B cell (primary cell): ENCODE measurements at regions of chr16 and their contacts with region 1.

Region 1: GRCh38 chr16:87853411-87854052 is 15.8 kb downstream of the SLC7A5 start:
- DNase-seq: peak; percentile 80
- ATAC-seq: peak; percentile 69
- H3K4me3 ChIP-seq: peak overlapping the region in 2 of 5 experiments; percentile 22 to 46
- H3K4me3 Mint-ChIP-seq: peak overlapping the region; percentile 71
- H3K27ac ChIP-seq: no peak overlapping the region
- H3K27ac Mint-ChIP-seq: peak overlapping the region; percentile 15
- H3K4me1 ChIP-seq: peaks cover 4 to 37% of the 10 kb centered on the region in 2 donors
- H3K4me1 Mint-ChIP-seq: peaks cover 29% of the 10 kb centered on the region
- H3K27me3 ChIP-seq: no peaks in the 10 kb centered on the region
- H3K27me3 Mint-ChIP-seq: no peaks in the 10 kb centered on the region
- CTCF ChIP-seq: no peak

Region 2: DNA sequence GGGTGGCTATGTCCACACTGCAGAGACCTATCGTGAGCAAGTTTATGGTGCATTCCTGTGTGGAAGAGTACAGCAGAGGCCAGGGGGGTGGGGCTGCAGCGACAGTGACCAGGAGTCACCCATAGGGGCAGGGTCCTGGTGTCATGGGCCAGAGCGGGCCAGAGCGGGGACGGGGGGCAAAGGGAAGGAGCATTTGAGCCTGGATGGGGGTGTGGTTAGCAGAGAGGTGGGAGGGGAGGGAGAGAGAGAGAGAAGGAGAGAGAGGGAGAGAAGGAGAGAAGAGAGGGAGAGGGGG is 233.4 kb before region 1 on chr16:
- CTCF ChIA-PET with region 1: no interaction called
- POLR2A ChIA-PET with region 1: no interaction called
- intact Hi-C with region 1: no loop called
- DNase-seq: no peak
- ATAC-seq: no peak
- H3K4me3 ChIP-seq: no peak overlapping the region
- H3K4me3 Mint-ChIP-seq: no peak overlapping the region
- H3K27ac ChIP-seq: no peak overlapping the region
- H3K27ac Mint-ChIP-seq: no peak overlapping the region
- H3K4me1 ChIP-seq: no peaks in the 10 kb centered on the region
- H3K4me1 Mint-ChIP-seq: no peaks in the 10 kb centered on the region
- H3K27me3 ChIP-seq: no peaks in the 10 kb centered on the region
- H3K27me3 Mint-ChIP-seq: peaks cover 14% of the 10 kb centered on the region
- CTCF ChIP-seq: no peak

Region 3: DNA sequence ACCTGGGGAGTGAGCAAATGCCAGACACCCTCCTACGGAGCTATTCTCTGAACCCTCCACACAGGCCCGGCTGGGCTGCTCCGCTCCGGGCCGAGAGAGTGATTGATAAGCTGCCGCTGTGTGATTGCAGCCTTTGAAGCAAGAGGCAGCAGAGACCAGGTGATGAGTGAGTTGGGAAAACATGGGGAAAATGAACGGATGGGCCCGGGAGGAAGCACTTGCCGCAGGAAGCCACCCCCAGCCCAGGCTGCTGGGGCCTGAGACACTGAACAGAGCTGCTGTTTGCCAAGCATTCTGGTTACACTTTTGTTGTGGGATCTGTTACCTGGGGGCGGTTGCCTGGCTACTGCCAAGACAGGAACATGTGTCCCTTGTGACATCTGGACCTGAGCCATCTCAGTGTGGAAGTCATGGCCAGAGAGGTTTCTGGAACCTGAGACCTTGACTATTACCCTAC is 41.3 kb before region 1 on chr16:
- CTCF ChIA-PET with region 1: interaction called, 26 read pairs
- POLR2A ChIA-PET with region 1: no interaction called
- intact Hi-C with region 1: loop called (anchors 5 kb)
- DNase-seq: no peak
- ATAC-seq: no peak
- H3K4me3 ChIP-seq: no peak overlapping the region
- H3K4me3 Mint-ChIP-seq: no peak overlapping the region
- H3K27ac ChIP-seq: no peak overlapping the region
- H3K27ac Mint-ChIP-seq: peak overlapping the region; percentile 27
- H3K4me1 ChIP-seq: peaks cover 33 to 51% of the 10 kb centered on the region in 2 donors
- H3K4me1 Mint-ChIP-seq: peaks cover 49% of the 10 kb centered on the region
- H3K27me3 ChIP-seq: peaks cover 0 to 5% (median 0%) of the 10 kb centered on the region in 4 experiments
- H3K27me3 Mint-ChIP-seq: no peaks in the 10 kb centered on the region
- CTCF ChIP-seq: no peak

Region 4: GRCh38 chr16:87834623-87835407 is 18.7 kb before region 1 on chr16:
- CTCF ChIA-PET with region 1: interaction called, 16 read pairs
- POLR2A ChIA-PET with region 1: no interaction called
- intact Hi-C with region 1: no loop called
- DNase-seq: no peak
- ATAC-seq: no peak
- H3K4me3 ChIP-seq: no peak overlapping the region
- H3K4me3 Mint-ChIP-seq: no peak overlapping the region
- H3K27ac ChIP-seq: no peak overlapping the region
- H3K27ac Mint-ChIP-seq: no peak overlapping the region
- H3K4me1 ChIP-seq: peaks cover 3 to 21% of the 10 kb centered on the region in 2 donors
- H3K4me1 Mint-ChIP-seq: peaks cover 14% of the 10 kb centered on the region
- H3K27me3 ChIP-seq: no peaks in the 10 kb centered on the region
- H3K27me3 Mint-ChIP-seq: no peaks in the 10 kb centered on the region
- CTCF ChIP-seq: no peak

Region 5: DNA sequence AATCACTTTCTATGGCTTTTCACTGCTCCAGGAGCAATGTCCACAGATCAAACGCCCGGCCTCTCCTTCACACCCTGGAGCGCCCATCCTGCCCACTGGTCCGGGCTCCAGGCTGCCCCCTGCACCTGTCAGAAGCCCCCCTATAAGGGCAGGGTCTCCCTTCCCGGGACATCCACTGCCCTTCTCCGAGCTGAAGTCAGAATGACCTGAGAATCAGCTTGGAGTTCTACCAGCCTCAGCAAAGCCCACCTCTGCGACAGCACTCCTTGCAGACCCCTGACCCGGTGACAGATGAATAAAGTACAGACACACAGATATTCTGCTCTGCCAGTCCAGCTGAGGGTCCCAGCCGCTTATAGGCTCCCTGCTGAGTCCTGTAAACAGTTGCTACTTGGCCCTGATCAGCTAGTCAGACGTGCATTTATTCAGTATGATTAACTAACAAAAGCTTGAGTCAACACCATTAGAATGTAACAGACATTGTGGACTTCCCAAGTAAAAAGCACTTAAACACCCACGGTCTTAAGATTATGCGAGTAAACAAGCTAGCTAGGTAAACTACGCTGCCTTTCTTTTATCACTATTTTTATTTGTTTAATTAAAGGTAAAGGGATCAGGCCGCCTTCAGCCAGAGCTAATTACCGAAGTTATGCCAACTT is 10.9 kb after region 1 on chr16:
- CTCF ChIA-PET with region 1: interaction called, 72 read pairs
- POLR2A ChIA-PET with region 1: interaction called, 4 read pairs
- intact Hi-C with region 1: no loop called
- DNase-seq: no peak
- ATAC-seq: no peak
- H3K4me3 ChIP-seq: no peak overlapping the region
- H3K4me3 Mint-ChIP-seq: no peak overlapping the region
- H3K27ac ChIP-seq: no peak overlapping the region
- H3K27ac Mint-ChIP-seq: no peak overlapping the region
- H3K4me1 ChIP-seq: peaks cover 5 to 20% of the 10 kb centered on the region in 2 donors
- H3K4me1 Mint-ChIP-seq: peaks cover 32% of the 10 kb centered on the region
- H3K27me3 ChIP-seq: no peaks in the 10 kb centered on the region
- H3K27me3 Mint-ChIP-seq: no peaks in the 10 kb centered on the region
- CTCF ChIP-seq: no peak

Region 6: GRCh38 chr16:87877938-87878507 is 24.5 kb after region 1 on chr16:
- CTCF ChIA-PET with region 1: interaction called, 72 read pairs
- POLR2A ChIA-PET with region 1: no interaction called
- intact Hi-C with region 1: no loop called
- DNase-seq: no peak
- ATAC-seq: no peak
- H3K4me3 ChIP-seq: no peak overlapping the region
- H3K4me3 Mint-ChIP-seq: no peak overlapping the region
- H3K27ac ChIP-seq: no peak overlapping the region
- H3K27ac Mint-ChIP-seq: no peak overlapping the region
- H3K4me1 ChIP-seq: no peaks in the 10 kb centered on the region
- H3K4me1 Mint-ChIP-seq: peaks cover 7% of the 10 kb centered on the region
- H3K27me3 ChIP-seq: peaks cover 0 to 7% (median 1%) of the 10 kb centered on the region in 4 experiments
- H3K27me3 Mint-ChIP-seq: peaks cover 23% of the 10 kb centered on the region
- CTCF ChIP-seq: no peak